ENCODE measurements at regions of chr1 and their contacts with region 1.

Region 1: DNA sequence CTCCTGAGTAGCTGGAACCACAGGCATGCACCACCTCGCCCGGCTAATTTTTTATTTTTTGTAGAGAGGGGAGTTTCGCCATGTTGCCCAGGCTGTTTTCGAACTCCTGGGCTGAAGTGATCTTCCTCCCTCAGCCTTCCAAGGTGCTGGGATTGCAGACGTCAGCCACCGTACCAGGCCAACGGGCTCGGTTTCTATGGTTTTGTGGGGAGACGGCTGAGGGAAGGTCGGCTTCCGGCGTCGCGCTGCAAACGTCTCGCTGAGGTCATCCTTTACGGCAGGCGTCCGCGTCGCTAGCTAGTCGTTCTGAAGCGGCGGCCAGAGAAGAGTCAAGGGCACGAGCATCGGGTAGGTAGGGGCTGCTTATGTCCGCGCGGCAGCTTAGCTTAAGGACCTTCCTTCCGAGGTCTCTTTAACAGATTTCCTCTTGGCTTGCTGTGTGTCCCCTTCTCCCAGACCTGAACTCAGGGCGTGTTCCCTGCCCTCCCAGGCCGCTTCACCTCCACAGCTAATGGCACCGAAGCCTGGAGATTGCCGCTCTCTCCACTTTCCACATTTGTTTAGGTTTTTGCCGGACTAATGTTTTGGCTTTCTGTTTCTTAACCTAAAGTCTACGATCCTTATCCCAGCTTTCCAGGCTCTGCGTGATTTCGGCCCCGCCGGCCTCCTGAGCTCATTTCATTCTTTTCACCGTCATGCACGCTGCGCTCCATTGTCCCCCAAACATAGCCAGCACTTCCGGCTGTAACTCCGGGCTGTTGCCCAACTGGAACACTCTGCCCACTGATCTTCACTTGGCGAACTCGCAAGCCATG is at the start of gene NDUFS5:
- DNase-seq: peak; percentile 82

Region 2: GRCh38 chr1:38727684-38728584 is 298.3 kb before region 1 on chr1:
- CTCF ChIA-PET with region 1: no interaction called
- POLR2A ChIA-PET with region 1: no interaction called
- DNase-seq: no peak

Region 3: GRCh38 chr1:38873027-38873969 is 153.0 kb before region 1 on chr1 and contains the start of gene MYCBP:
- CTCF ChIA-PET with region 1: no interaction called
- POLR2A ChIA-PET with region 1: interaction called, 11 read pairs
- DNase-seq: peak; percentile 99

Region 4: GRCh38 chr1:38950553-38950952 is 75.7 kb before region 1 on chr1:
- CTCF ChIA-PET with region 1: no interaction called
- POLR2A ChIA-PET with region 1: no interaction called
- DNase-seq: no peak

Region 5: GRCh38 chr1:38990738-38991639 is 35.3 kb before region 1 on chr1 and contains the start of gene AKIRIN1:
- CTCF ChIA-PET with region 1: no interaction called
- POLR2A ChIA-PET with region 1: interaction called, 13 read pairs
- DNase-seq: peak; percentile 98

Region 6: DNA sequence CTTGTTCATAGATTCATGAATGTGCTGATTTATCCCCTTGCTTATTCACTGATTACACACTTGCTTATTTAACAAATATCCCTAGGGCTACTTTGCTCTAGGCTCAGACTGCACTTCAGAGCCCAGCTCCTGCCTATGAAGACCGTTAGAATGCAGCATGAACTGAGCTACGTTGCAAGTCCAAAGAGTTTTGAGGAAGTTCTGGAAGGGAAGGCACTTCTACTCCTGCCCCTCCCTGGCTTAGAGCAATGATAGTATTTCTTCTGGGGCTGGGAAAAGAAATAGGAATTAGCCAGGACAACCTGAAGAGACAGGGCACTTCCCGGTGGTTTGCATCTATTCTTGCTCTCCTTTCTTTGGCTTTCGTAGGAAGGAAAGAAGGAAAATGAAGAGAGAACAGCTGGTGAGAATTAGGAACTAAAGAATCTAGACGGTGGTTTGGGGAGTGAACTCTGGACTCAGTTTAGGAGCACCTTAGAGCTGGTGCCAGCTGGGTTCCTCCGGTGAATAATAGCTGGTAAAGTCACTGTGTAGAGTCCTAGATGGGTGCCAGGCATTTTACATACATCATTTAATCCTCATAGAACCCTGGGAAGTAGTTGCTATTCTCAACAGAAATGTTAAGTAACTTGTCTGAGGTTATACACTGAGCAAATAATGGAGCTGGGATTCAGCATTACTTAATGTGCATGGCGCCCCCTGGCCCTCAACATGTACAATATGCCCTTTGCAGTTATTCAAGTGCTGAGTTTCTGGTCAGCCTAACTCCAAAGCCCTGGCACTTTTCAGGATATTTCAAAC is 65.8 kb after region 1 on chr1:
- CTCF ChIA-PET with region 1: no interaction called
- POLR2A ChIA-PET with region 1: interaction called, 11 read pairs
- DNase-seq: peak; percentile 46

Region 7: DNA sequence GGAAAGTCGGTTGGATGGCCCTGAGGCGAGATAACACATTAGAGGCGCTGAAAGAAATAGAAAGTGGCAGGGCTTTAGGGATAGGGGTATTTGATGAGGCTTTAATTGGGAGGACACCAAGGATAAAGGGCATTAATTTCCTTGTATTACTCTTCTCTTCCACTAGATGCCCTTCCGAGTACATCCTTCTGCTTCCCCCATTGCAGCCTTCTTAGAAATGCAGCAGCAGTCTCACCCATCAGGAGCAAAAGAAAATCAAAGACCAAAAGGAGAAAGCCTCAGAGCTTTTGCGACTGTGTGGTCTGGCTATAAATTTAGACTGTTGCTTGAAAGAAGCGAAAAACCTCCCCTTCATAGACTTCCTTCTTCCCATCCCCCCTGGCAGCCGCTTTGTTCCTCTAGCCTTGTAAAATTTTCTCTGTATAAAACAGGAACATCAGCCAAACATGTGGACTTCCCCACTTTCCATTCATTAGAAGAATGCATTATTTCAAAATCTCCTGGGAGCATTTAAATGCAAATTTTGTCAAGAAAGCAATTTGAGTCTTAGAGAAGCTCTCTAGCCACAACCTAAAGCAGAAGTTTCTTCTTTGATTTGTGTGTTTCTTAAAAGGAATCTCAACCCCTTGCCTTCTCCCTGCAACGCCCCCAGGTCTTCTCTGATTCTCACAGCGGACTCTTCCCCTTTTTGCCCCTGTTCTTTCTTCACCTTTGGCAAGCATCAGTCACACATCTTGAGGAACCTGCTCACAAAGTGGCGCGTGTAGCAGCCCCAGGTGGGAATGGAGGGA is 76.5 kb after region 1 on chr1:
- CTCF ChIA-PET with region 1: no interaction called
- POLR2A ChIA-PET with region 1: no interaction called
- DNase-seq: peak; percentile 66

Region 8: DNA sequence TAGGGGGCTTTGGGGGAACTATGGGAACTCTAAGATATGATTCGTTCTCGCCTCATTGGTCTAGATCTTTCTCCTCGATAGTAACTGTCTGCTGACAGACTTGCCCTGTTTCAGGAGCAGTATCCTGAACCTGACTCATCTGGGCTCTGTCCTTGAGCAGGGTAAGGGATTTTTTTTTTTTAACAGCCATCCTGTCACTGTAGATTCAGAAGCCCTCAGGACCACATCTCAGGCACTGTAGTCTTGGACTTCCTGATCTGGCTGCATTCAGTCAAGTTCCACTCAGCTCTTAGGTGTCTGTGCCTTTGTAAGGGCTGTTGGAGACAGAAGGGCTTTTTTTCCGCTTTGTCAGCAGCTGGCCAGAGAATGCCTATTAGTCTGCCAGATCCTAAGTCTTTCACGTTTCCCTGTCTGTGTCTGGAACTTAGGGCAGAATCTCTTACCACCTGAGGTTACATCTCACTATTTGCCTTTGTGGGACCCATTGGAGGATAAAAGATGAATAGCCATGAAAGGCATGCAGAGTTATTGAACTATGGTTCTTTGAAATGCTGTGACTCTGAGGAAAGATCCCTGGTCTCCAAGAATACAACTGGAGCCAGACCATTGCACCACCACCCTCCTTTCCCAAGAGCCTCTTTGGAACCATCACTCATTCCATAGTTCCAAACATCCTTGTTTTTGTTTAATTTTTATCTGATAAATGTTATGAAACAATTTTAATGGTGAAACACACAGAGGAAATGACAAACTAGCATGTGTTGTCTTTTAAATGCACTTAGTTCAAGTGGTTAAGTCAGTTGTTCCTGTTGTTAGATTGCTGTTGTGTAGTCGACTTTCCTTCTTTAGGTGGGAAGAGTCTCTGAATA is 128.5 kb after region 1 on chr1:
- CTCF ChIA-PET with region 1: no interaction called
- POLR2A ChIA-PET with region 1: no interaction called
- DNase-seq: no peak